Kidney (tissue), 22 donors: ENCODE measurements at regions of chr3 and their contacts with region 1.

Region 1: DNA sequence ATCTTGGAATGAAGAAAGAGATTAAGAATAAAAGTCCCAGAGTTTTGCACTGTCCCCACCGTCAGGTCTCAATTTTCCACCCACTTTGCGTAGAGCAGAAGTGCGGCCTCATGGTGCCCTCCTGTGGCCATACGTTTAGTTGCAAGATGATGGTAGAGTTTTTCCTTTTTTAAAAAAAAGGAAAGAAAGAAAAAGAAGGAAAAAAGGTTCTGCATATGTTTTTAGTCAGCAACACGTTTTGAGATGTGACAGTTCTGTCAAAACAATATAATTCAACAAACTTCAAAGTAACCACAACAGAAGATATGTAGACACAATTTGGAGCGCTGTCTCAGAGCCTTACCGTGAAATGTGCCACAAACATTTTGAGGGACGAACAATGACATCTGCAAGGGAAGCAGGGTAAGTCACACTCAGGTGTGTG is 24.6 kb downstream of the EBLN2 start:
- DNase-seq: peak in 3 of 5 donors; percentile 43 to 71 (median 54)
- H3K4me3 ChIP-seq: no peak overlapping the region
- H3K27ac ChIP-seq: no peak overlapping the region
- H3K4me1 ChIP-seq: no peaks in the 10 kb centered on the region
- H3K27me3 ChIP-seq: no peaks in the 10 kb centered on the region
- CTCF ChIP-seq: peak; percentile 81

Region 2: GRCh38 chr3:72679540-72680198 is 406.4 kb before region 1 on chr3:
- intact Hi-C with region 1: no loop called
- DNase-seq: peak in 2 of 5 donors; percentile 34 to 55
- H3K4me3 ChIP-seq: no peak overlapping the region
- H3K27ac ChIP-seq: no peak overlapping the region
- H3K4me1 ChIP-seq: peaks cover 0 to 3% (median 0%) of the 10 kb centered on the region in 3 donors
- H3K27me3 ChIP-seq: no peaks in the 10 kb centered on the region
- CTCF ChIP-seq: no peak

Region 3: GRCh38 chr3:72847751-72848702 is 238.1 kb before region 1 on chr3 and contains the start of gene SHQ1:
- intact Hi-C with region 1: loop called (anchors 5 kb)
- DNase-seq: peak; percentile 94 to 99 (median 97)
- H3K4me3 ChIP-seq: peak within 1 kb of the TSS; percentile 96 to 100 (median 97)
- H3K27ac ChIP-seq: peak within 1 kb of the TSS; percentile 29 to 83
- H3K4me1 ChIP-seq: peaks cover 3 to 16% (median 4%) of the 10 kb centered on the region in 3 donors
- H3K27me3 ChIP-seq: no peaks in the 10 kb centered on the region
- CTCF ChIP-seq: no peak
- total RNA-seq, gene SHQ1: 23.1 TPM

Region 4: DNA sequence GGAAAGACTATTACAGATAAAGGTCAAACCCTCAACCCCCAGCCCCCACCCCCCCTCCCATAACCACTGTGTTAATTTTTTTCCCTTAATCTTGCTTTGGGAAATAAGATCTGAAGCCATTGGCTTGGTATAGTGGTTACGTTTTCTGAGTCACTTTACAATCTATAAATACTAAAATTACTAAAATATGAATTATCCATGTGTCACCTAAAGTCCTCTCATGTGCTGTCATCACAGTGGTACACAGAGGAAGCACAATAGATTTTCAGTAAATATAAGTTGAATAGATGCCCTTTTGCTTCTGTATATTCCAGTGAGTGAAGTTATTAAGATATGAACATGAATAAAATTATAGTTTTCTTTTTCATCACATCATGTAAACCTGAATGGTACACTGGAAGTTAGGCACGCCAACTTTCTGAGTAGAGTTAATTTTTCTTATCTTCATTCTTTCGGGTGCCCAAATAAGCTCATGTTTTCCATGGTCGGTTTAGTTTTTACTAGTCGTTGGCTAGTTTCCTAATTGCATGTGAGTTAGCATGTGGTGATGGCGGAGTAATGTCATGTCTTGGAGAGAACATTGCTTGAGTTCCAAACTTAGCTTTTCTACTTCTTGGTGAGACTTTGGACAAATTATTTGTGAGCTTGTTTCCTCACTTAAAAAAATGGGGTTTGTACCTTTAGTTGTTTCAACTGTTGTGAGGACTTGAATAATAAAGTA is 77.9 kb before region 1 on chr3:
- intact Hi-C with region 1: no loop called
- DNase-seq: no peak
- H3K4me3 ChIP-seq: no peak overlapping the region
- H3K27ac ChIP-seq: no peak overlapping the region
- H3K4me1 ChIP-seq: peaks cover 0 to 5% (median 5%) of the 10 kb centered on the region in 3 donors
- H3K27me3 ChIP-seq: no peaks in the 10 kb centered on the region
- CTCF ChIP-seq: no peak